A549 (cell line): ENCODE measurements at regions of chr7 and their contacts with region 1.

Region 1: DNA sequence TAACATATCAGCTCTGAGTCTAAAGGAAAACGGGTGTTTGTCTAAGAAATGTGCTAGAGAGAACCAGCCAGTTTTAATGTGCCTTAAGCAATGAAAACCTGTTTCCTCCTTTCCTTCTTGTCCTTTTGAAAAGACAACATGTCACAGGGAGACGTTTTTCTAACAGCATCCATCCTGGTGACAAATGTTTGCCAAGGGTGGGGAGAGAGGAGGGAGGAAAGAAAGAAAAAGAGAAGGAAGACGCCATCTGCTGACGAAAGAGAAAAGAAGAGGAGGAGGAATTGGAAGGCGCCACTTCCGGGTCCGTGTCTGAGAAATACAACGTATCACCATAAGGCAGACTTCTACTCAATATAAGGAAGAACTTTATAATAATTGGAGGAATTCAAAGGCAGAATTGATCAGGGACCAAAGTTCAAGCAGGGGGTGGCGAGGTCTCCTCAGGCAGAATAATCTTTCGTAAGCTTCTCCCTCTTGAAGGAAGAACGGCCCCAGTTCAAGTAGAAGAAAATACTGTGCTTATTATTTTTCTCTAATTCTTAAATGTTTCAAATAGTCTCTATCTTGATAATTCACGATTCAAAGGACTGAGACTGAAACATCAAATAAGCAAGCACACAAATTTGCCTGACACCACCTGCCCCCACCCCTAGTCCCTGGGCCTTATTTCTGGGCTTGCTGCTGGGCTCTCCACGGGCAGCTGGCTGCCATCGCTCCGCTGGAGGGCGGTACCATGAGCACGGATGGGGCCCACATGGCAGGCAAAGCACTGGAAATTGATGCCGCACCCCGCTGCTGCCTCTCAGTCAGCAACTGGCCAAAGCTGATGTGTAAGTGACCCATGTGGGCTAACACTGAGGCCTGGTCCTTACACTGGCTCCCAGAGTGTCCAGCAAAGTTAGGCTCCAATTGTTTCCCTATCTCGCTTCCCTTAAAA is 273.7 kb upstream of the KLF14 start:
- DNase-seq: peak; percentile 79 to 93
- ATAC-seq: peak; percentile 86
- H3K4me3 ChIP-seq: no peak overlapping the region
- H3K27ac ChIP-seq: peak overlapping the region; percentile 87 to 91
- H3K4me1 ChIP-seq: peaks cover 65% of the 10 kb centered on the region
- CTCF ChIP-seq: peak; percentile 68
- EP300 ChIP-seq: no peak
- POLR2A ChIP-seq: no peak
- RAD21 ChIP-seq: peak; percentile 76 to 82

Region 2: DNA sequence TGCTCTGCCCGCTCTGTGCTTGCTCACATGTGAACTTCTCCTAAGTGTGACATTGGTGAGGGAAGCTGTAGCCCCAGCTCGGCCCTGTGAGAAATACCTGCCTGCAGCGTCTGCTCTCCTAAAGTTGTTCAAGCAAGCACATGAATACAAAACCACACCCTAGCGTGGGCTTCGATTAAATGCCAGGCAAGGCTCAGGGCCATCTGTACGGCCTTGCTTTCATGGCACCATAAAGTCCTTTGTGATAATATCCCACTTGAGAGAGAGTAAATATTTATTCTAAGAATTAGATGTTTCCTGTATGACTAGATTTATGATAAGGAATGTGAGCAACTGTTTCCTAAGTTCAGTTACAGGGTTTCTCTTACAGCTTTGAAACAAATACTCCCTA is 10.8 kb before region 1 on chr7:
- CTCF ChIA-PET with region 1: interaction called, 28 read pairs
- POLR2A ChIA-PET with region 1: no interaction called
- DNase-seq: peak in 1 of 2 experiments; percentile 69
- ATAC-seq: peak; percentile 45 to 75; a peak in 5 of 6 replicates
- H3K4me3 ChIP-seq: no peak overlapping the region
- H3K27ac ChIP-seq: peak overlapping the region; percentile 69 to 81
- H3K4me1 ChIP-seq: peaks cover 60% of the 10 kb centered on the region
- CTCF ChIP-seq: no peak
- EP300 ChIP-seq: no peak
- POLR2A ChIP-seq: no peak
- RAD21 ChIP-seq: no peak

Region 3: DNA sequence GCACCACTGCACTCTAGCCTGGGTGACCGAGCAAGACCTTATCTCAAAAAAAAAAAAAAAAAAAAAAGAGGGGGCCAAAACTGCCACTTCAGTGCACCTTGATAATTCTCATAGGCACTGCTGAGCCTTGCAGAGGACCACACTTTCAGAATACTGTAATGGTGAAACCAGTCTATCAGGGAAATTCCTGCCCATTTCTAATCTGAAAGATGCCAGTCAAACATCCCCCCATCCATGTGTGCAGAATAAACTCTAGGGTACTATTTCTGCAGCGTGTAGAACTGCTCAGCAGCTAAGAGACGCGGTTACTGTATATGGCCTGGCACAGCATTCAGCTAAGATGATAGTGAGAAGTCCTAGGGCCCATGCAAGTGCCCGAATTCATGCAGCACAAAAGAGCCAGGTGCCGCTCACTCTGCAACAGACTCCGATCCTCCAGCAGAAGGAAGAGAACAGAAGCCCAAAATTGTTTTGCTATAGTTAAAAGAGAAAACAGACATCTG is 13.1 kb after region 1 on chr7:
- CTCF ChIA-PET with region 1: interaction called, 19 read pairs
- POLR2A ChIA-PET with region 1: no interaction called
- DNase-seq: no peak
- ATAC-seq: 0 out of 6 replicates have a peak, but pooled peaks of 1 of the 2 experiments have one; percentile 9
- H3K4me3 ChIP-seq: no peak overlapping the region
- H3K27ac ChIP-seq: no peak overlapping the region
- H3K4me1 ChIP-seq: peaks cover 24% of the 10 kb centered on the region
- CTCF ChIP-seq: no peak
- EP300 ChIP-seq: no peak
- POLR2A ChIP-seq: no peak
- RAD21 ChIP-seq: no peak